ENCODE measurements at regions of chr12 and their contacts with region 1.

Region 1: DNA sequence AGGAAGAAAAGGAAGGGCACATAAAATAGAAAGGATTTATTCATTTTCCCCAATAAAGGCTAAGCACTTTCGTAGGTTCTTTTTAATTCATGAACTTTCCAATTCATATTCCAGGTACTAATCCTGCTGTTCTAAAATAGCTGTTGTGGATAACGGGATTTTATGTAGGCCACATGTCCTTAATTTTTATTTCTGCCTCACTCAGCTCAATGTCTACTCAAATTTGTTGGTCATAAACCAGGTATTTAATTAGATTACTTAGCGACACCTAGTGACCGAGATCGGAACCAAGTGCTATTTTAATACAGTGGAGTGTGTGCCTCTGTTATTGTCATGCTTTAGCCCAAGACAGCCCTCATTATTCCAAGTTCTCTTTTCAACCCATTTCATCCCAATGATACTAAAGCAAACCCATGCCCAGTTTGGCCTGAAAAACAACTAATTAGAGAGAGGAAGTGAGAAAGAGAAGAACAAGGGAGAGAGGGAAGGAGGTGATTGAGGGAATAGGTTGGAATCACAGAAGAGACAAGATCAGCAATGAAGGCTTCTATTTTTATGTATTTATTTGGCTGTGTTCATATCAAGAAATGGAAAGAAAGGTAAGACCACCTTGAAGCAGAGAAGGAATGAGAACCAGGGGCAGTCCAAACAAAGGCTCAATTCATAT is 45.9 kb upstream of the IFNG-AS1 start:
- DNase-seq: no peak
- H3K4me3 ChIP-seq: no peak overlapping the region
- H3K27ac ChIP-seq: no peak overlapping the region
- H3K4me1 ChIP-seq: peaks cover 0 to 3% (median 0%) of the 10 kb centered on the region in 3 donors
- H3K27me3 ChIP-seq: no peaks in the 10 kb centered on the region
- CTCF ChIP-seq: peak; percentile 66 to 81 (median 74)
- POLR2A ChIP-seq: no peak

Region 2: GRCh38 chr12:67355578-67356379 is 587.6 kb before region 1 on chr12:
- intact Hi-C with region 1: loop called (anchors 5 kb)
- DNase-seq: no peak
- H3K4me3 ChIP-seq: no peak overlapping the region
- H3K27ac ChIP-seq: no peak overlapping the region
- H3K4me1 ChIP-seq: peaks cover 0 to 18% (median 0%) of the 10 kb centered on the region in 3 donors
- H3K27me3 ChIP-seq: no peaks in the 10 kb centered on the region
- CTCF ChIP-seq: peak; percentile 31 to 53 (median 45)
- POLR2A ChIP-seq: no peak

Region 3: DNA sequence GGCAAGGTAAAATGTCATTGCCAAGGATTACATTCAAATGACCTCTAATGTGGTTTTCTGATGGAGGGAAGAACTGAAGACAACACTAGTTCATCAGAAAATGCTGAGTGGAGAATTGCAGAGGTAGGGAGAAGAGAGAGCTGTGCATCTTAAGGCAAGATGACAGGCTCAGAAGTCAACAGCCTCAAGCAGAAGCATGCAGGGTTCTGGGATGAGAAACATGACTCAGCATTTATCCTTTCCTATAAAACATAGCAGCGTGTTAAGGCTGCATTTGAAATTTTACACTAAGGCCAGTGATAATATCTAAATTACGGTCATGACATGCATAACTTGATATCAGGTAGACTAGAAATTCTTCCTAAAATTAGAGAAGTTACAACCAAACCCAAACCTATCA is 348.5 kb before region 1 on chr12:
- intact Hi-C with region 1: no loop called
- DNase-seq: no peak
- H3K4me3 ChIP-seq: no peak overlapping the region
- H3K27ac ChIP-seq: no peak overlapping the region
- H3K4me1 ChIP-seq: peaks cover 0 to 22% (median 6%) of the 10 kb centered on the region in 3 donors
- H3K27me3 ChIP-seq: no peaks in the 10 kb centered on the region
- CTCF ChIP-seq: no peak
- POLR2A ChIP-seq: no peak

Measured in esophagus squamous epithelium (tissue), 5 donors.